ENCODE measurements at regions of chrX and their contacts with region 1.

Region 1: DNA sequence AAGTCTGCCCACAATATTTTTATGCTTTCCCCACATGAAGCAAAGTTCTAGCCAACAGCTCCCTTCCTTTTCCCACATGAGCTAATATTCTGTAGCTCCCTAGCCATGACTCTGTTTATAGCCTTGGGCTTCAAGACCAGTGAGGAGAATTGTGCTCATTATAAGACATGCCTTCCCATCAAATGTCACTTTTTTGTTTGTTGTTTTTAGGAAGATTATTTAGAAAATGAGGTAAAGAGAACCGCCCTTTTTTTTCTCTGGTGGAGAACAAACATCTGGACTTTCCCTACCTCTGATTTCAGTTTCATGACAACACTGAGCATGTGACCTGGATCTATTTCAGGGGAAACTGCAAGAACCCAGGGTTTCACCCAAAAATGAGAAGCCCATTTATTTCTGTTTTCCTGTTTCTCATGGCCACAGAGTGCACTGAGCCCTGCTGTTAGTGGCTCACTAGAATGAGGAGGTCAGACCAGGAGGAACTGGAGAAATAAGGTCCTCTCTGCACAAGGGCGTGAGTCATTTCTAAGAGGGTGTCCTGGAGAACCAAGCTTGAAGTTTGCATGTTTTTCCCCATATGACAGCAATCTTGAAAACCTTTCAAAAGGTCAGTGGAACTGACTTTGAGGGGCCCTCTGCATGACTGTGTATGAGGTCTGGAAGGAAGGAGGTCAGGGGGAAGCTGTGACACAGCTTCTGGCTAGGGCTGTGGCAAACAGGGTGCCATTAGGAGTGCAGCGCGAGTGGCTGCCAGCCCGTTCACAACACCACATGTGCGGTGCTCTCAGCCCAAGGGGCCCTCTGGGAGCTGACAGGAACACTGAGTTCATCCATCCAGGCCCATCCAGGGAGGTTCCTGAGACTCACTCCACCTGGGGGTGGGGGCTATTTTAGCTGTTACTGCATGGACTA is 55.2 kb downstream of the CHST7 start:
- DNase-seq: peak; percentile 46
- H3K4me3 Mint-ChIP-seq: no peak overlapping the region
- H3K27ac Mint-ChIP-seq: peak overlapping the region; percentile 64
- H3K4me1 Mint-ChIP-seq: peaks cover 42% of the 10 kb centered on the region
- H3K27me3 Mint-ChIP-seq: no peaks in the 10 kb centered on the region

Region 2: GRCh38 chrX:46611658-46612362 is 16.9 kb before region 1 on chrX:
- CTCF ChIA-PET with region 1: no interaction called
- POLR2A ChIA-PET with region 1: no interaction called
- intact Hi-C with region 1: loop called (anchors 2 kb)
- DNase-seq: peak; percentile 51
- H3K4me3 Mint-ChIP-seq: peak overlapping the region; percentile 28
- H3K27ac Mint-ChIP-seq: peak overlapping the region; percentile 62
- H3K4me1 Mint-ChIP-seq: peaks cover 35% of the 10 kb centered on the region
- H3K27me3 Mint-ChIP-seq: no peaks in the 10 kb centered on the region